Endothelial cell of umbilical vein (primary cell): ENCODE measurements at regions of chr1 and their contacts with region 1.

Region 1: DNA sequence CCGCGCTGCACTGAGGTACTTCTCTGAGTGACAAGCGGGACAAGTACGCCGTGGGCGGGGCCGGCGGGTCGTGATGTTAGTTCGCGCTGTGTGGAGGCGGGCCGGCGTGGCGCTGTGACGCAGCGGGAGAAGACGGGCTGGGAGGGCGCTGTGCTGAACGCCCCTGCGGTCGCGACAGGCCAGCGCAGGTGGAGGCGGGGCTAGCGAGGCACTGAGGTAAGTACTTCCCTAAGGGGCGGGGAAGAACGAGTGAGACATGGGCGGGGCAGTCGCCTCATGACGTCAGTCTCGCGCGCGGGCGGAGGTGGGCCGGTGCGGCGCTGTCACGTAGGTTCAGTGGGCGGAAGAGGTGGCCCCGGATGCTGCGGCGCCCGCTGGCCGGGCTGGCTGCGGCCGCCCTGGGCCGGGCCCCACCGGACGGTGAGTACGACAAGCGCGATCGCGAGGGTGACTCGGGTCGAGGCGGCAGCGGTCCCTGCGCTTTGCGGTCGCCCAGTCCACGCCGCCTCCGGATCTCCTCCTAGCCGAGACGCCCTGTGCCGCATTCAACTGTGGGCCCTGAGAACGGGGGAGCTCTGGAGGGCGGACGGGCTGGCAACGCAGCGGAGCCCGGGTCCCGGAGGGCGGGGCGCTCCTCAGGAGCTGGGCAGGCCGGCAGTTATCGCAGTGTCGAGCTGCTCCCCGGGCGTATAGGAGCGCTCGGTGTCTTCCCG is at the start of gene GUK1:
- DNase-seq: peak; percentile 100
- H3K4me3 ChIP-seq: peak within 1 kb of the TSS; percentile 53 to 77 (median 65)
- H3K27ac ChIP-seq: peak within 1 kb of the TSS; percentile 82
- H3K4me1 ChIP-seq: peaks cover 18% of the 10 kb centered on the region
- H3K27me3 ChIP-seq: peaks cover 15 to 21% of the 10 kb centered on the region in 2 experiments
- CTCF ChIP-seq: peak in 1 of 2 donors; percentile 43
- POLR2A ChIP-seq: peak; percentile 95
- total RNA-seq, gene GUK1: 237 and 239 TPM in 2 replicates

Region 2: GRCh38 chr1:228087771-228088251 is 52.3 kb before region 1 on chr1:
- CTCF ChIA-PET with region 1: no interaction called
- POLR2A ChIA-PET with region 1: no interaction called
- dilution Hi-C with region 1: no loop called
- intact Hi-C with region 1: loop called (anchors 1 kb)
- DNase-seq: peak; percentile 94
- H3K4me3 ChIP-seq: peak overlapping the region in 1 of 3 experiments; percentile 10
- H3K27ac ChIP-seq: peak overlapping the region; percentile 94
- H3K4me1 ChIP-seq: peaks cover 79% of the 10 kb centered on the region
- H3K27me3 ChIP-seq: no peaks in the 10 kb centered on the region
- CTCF ChIP-seq: no peak
- POLR2A ChIP-seq: no peak

Region 3: DNA sequence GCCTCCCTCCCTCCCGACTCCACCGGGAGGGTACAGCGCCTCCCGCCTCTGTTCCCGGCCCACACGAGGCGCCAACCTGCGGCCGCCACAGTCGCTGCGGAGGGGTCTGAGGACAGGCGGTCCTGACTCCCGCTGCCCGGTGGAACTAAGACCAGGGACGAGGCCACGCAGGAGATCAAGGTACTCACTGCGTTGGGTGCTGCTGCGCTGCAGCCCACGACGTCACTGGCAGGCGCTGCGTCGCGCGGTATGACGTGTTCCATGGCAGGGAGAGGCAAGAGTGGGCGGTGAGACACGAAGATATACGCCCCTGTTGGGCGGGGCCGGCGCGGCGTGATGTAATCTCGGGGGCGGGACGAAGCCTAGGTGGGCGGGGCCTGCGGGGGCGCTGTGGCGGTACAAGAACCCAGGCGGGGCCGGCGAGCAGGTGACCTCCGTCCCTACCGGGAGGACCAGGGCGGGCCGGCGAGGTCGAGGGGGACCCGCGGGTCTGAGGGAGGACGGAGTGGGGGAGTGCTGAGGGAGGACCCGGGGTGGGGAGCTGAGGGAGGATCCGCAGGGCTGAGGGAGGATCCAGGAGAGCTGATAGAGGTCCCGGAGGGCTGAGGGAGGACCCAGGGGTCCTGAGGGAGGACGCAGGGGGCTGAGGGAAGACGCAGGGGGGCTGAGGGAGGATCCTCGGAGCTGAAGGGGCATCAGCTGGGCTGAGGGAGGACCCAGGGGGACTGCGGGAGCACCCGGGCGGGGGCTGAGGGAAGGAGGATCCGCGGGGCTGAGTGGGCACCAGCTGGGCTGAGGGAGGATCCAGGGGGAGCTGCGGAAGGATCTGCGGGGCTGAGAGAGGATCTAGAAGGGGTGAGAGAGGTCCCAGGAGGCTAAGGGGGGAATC is 30.8 kb before region 1 on chr1 and contains the start of gene MRPL55:
- CTCF ChIA-PET with region 1: no interaction called
- POLR2A ChIA-PET with region 1: no interaction called
- dilution Hi-C with region 1: no loop called
- intact Hi-C with region 1: loop called (anchors 1 kb)
- DNase-seq: peak; percentile 98
- H3K4me3 ChIP-seq: peak within 1 kb of the TSS; percentile 29 to 92 (median 63)
- H3K27ac ChIP-seq: peak within 1 kb of the TSS; percentile 32
- H3K4me1 ChIP-seq: peaks cover 13% of the 10 kb centered on the region
- H3K27me3 ChIP-seq: no peaks in the 10 kb centered on the region
- CTCF ChIP-seq: no peak
- POLR2A ChIP-seq: peak; percentile 82
- total RNA-seq, gene MRPL55: 57.0 and 58.7 TPM in 2 replicates

Region 4: DNA sequence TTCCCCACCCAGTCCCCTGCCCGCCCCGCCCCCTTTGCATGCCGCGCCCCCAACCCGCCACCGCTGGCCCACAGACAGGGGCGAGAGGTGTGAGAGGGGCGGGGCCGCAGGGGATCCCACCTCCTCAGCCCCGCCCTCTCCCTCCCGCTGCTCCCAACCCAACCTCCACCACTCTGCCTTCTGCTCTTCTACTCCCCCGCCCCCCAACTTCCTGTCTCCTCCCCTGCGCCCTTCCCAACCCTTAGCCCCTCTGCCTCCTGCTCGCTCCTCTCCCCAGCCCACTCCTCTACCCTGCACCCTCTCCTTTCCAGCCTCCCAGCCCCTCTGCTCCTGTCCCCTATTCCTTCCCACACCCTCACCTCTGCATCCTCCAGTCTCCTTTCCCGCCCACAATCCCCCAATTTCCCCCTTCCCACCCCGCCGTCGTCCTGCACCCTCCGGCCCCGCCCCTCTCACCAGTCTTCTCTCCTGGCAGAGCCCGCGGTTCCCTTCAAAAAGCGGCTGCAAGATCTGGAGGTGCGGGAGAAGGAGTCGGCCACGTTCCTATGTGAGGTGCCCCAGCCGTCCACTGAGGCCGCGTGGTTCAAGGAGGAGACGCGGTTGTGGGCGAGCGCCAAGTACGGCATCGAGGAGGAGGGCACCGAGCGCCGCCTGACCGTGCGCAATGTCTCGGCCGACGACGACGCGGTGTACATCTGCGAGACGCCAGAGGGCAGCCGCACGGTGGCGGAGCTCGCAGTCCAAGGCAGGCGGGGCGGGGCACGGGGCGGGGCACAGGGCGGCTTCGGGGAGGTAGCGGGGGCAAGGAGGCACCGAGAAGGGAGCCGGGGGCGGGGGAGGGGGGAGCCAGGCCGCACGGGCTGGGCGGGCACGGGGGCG is 73.1 kb after region 1 on chr1:
- CTCF ChIA-PET with region 1: no interaction called
- POLR2A ChIA-PET with region 1: no interaction called
- dilution Hi-C with region 1: no loop called
- intact Hi-C with region 1: loop called (anchors 2 kb)
- DNase-seq: peak; percentile 63
- H3K4me3 ChIP-seq: peak overlapping the region in 1 of 3 experiments; percentile 26
- H3K27ac ChIP-seq: no peak overlapping the region
- H3K4me1 ChIP-seq: no peaks in the 10 kb centered on the region
- H3K27me3 ChIP-seq: peaks cover 4 to 16% of the 10 kb centered on the region in 2 experiments
- CTCF ChIP-seq: peak; percentile 33 to 73
- POLR2A ChIP-seq: no peak

Region 5: DNA sequence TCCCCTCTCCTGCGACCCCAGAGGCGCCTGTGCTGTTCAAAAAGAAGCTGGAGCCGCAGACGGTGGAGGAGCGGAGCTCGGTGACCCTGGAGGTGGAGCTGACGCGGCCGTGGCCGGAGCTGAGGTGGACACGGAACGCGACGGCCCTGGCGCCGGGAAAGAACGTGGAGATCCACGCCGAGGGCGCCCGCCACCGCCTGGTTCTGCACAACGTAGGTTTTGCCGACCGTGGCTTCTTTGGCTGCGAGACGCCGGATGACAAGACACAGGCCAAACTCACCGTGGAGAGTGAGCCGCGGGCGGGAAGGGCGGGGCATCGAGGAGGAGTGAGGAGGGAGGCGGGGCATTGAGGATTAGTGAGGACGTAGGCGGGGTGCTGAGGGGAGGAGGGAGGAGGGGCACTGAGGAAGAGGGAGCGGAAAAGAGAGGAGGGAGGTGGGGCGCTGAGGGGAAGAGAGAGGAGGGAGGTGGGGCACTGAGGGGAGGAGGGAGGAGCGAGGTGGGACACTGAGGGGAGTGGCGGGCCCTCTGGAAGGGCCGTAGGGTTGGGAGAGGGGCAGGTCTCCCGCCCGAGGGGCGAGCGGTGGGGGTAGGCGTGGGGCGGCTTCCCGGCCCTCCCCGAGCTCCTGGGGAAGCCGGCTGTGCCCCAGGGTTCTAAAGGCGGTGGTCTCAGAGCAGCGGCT is 135.8 kb after region 1 on chr1:
- CTCF ChIA-PET with region 1: no interaction called
- POLR2A ChIA-PET with region 1: no interaction called
- dilution Hi-C with region 1: no loop called
- intact Hi-C with region 1: loop called (anchors 10 kb)
- DNase-seq: peak; percentile 75
- H3K4me3 ChIP-seq: peak overlapping the region; percentile 40 to 62 (median 49)
- H3K27ac ChIP-seq: peak overlapping the region; percentile 21
- H3K4me1 ChIP-seq: peaks cover 7% of the 10 kb centered on the region
- H3K27me3 ChIP-seq: no peaks in the 10 kb centered on the region
- CTCF ChIP-seq: no peak
- POLR2A ChIP-seq: no peak

Region 6: DNA sequence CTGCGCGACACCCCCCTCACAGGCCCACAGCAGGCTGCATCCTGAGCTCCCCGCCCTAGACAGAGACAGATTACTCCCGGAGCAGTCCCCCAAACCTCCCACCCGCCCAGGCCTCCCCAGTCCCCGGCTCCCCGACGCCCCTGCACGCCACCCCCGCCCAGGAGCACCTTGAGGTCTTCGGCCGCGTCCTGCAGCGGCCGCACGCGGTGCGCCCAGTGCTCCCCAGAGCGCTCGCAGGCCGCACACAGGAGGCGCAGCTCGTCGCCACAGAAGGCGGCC is 265.8 kb after region 1 on chr1:
- CTCF ChIA-PET with region 1: no interaction called
- POLR2A ChIA-PET with region 1: interaction called, 3 read pairs
- dilution Hi-C with region 1: no loop called
- intact Hi-C with region 1: loop called (anchors 2 kb)
- DNase-seq: no peak
- H3K4me3 ChIP-seq: peak overlapping the region; percentile 70 to 96 (median 73)
- H3K27ac ChIP-seq: no peak overlapping the region
- H3K4me1 ChIP-seq: peaks cover 23% of the 10 kb centered on the region
- H3K27me3 ChIP-seq: no peaks in the 10 kb centered on the region
- CTCF ChIP-seq: no peak
- POLR2A ChIP-seq: no peak